Activated CD4-positive, alpha-beta T cell treated with anti-CD3 and anti-CD28 coated beads, Interleukin-2, amount 10 ng/mL, durations not matched to agents 24 days and 14 days (primary cell): ENCODE measurements at regions of chr11 and their contacts with region 1.

Region 1: GRCh38 chr11:107565219-107565937 is at the start of gene ALKBH8:
- DNase-seq: peak; percentile 93
- H3K4me3 Mint-ChIP-seq: peak within 1 kb of the TSS; percentile 93
- H3K27ac Mint-ChIP-seq: peak within 1 kb of the TSS; percentile 90
- H3K4me1 Mint-ChIP-seq: peaks cover 40% of the 10 kb centered on the region
- H3K27me3 Mint-ChIP-seq: no peaks in the 10 kb centered on the region
- total RNA-seq, gene ALKBH8: 13.3 and 15.0 TPM in 2 replicates

Region 2: DNA sequence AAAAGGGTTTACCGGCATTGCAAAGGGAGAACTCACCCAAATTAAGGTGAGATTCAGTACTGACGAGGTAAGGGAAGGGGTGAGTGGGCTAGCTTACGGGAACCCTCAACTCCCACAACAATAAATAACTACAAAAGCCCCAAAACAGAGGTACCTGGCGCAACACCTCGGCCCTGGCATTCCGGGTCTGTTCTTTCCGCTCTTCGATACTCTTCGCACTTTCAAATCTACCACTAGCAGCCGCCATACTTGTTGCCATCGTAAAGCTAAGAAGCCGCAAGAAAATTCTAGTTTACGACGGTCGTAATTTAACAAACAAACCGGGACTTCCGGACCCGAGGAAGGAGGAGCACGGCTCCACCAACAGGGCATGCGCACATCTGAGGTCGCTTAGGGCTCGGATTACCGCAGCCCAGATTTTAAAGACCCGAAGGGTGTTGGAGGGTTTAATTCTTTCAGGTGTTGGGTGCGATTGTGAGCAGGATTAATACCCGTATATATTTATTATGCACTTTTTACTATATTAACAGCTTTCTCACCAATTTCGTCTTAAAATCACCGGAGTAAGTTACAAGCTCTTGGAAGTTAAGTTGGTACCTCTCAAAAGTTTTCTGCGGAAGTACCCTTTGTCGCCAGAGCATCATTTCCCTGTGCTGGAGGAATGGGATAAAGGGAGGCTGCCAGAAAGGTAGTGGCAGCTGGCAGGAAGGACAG is 107.7 kb before region 1 on chr11 and contains the start of gene CWF19L2:
- intact Hi-C with region 1: loop called (anchors 1 kb)
- DNase-seq: peak; percentile 96
- H3K4me3 Mint-ChIP-seq: peak within 1 kb of the TSS; percentile 85
- H3K27ac Mint-ChIP-seq: peak within 1 kb of the TSS; percentile 87
- H3K4me1 Mint-ChIP-seq: peaks cover 22% of the 10 kb centered on the region
- H3K27me3 Mint-ChIP-seq: peaks cover 7% of the 10 kb centered on the region
- total RNA-seq, gene CWF19L2: 16.1 and 17.6 TPM in 2 replicates

Region 3: GRCh38 chr11:107590460-107591377 is 25.3 kb after region 1 on chr11 and contains the start of gene ELMOD1:
- intact Hi-C with region 1: loop called (anchors 2 kb)
- DNase-seq: peak; percentile 74
- H3K4me3 Mint-ChIP-seq: peak within 1 kb of the TSS; percentile 81
- H3K27ac Mint-ChIP-seq: peak within 1 kb of the TSS; percentile 67
- H3K4me1 Mint-ChIP-seq: peaks cover 22% of the 10 kb centered on the region
- H3K27me3 Mint-ChIP-seq: peaks cover 81% of the 10 kb centered on the region
- total RNA-seq, gene ELMOD1: not detected in 2 replicates

Region 4: GRCh38 chr11:107770551-107770951 is 205.2 kb after region 1 on chr11:
- intact Hi-C with region 1: loop called (anchors 5 kb)
- DNase-seq: no peak
- H3K4me3 Mint-ChIP-seq: no peak overlapping the region
- H3K27ac Mint-ChIP-seq: no peak overlapping the region
- H3K4me1 Mint-ChIP-seq: peaks cover 3% of the 10 kb centered on the region
- H3K27me3 Mint-ChIP-seq: peaks cover 25% of the 10 kb centered on the region

Region 5: DNA sequence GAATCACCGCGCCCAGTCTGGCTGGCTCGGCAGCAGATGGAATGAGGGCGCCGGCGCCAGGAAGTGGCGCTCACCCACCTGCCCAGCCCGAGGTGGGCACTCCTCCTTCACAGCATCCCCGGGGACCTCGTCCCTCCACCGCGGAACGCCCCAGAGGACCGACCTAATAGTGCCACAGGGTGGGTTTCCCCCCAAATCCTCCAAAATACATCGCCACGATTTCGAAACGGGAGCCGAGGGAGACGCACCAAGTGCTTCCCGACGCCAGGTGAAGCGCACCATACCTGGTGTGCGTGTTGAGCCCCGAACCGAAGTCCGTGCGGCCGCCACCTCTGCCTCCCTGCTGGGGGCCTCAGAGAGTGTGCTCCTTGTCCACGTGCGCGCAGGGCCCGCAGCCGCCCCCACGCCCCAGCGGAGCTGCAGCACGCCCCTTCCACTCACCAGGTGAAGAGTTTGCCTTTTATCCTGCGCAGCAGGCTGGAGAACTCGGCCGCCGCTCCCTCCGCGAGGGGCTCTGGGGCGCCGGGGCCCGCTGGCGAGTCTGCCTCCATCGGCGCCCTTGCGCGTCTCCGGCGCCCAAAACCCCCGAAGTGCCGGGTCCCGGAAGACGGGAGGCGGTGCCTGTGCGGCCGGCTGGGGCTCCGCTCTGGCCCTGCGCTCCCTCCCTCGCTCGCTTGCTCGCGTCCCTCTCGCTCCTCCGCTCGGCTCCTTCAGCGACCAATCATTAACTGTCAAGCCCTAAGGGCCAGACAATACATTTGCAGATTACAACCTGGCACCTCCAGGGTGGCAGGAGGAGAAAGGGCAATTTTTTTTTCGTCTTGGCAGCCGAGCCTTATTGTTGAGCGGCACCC is 293.1 kb after region 1 on chr11 and contains the start of gene SLC35F2:
- intact Hi-C with region 1: loop called (anchors 2 kb)
- DNase-seq: peak; percentile 92
- H3K4me3 Mint-ChIP-seq: peak within 1 kb of the TSS; percentile 90
- H3K27ac Mint-ChIP-seq: peak within 1 kb of the TSS; percentile 93
- H3K4me1 Mint-ChIP-seq: peaks cover 25% of the 10 kb centered on the region
- H3K27me3 Mint-ChIP-seq: peaks cover 4% of the 10 kb centered on the region
- total RNA-seq, gene SLC35F2: 31.9 and 35.1 TPM in 2 replicates

Region 6: GRCh38 chr11:108647701-108648527 is 1082.5 kb after region 1 on chr11:
- intact Hi-C with region 1: loop called (anchors 10 kb)
- DNase-seq: peak; percentile 89
- H3K4me3 Mint-ChIP-seq: no peak overlapping the region
- H3K27ac Mint-ChIP-seq: no peak overlapping the region
- H3K4me1 Mint-ChIP-seq: no peaks in the 10 kb centered on the region
- H3K27me3 Mint-ChIP-seq: peaks cover 12% of the 10 kb centered on the region